ENCODE measurements at regions of chr22 and their contacts with region 1.

Region 1: GRCh38 chr22:37594237-37594636 is 14.3 kb upstream of the LGALS2 start:
- DNase-seq: no peak
- CTCF ChIP-seq: no peak

Region 2: DNA sequence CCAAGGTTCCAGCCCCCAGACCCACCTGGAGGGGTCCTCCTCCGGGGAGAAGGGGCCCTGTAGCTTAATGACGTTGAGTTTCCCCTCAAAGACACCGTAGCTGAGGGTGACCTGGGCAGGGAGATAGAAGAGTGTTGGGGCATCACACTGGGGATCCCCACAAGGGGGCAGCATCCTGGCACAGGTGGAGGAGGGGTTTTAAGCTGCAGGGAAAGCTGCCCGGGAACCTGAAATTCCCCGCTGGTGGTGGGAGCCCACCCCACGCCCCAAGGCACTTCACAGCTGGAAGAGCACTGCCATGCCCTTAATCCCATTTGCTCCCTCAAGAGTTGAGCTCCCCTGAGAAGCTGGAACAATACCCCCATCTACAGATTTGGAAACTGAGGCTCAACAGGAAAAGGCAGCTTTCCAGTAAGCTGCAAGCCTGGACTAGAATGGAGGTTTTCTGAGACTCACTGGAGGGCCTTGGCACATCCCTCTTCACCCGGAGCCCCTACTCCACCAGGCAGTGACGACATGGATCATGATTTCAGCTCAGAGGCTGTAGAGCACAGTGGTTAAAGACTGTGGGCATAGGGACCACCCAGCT is 121.7 kb before region 1 on chr22:
- in situ Hi-C with region 1: no loop called
- DNase-seq: peak; percentile 71
- CTCF ChIP-seq: peak; percentile 34

Region 3: GRCh38 chr22:37538590-37539357 is 55.5 kb before region 1 on chr22:
- in situ Hi-C with region 1: loop called (anchors 5 kb)
- DNase-seq: peak; percentile 95
- CTCF ChIP-seq: peak; percentile 98

Measured in GM13976 (cell line).